Activated CD4-positive, alpha-beta T cell treated with anti-CD3 and anti-CD28 coated beads, Interleukin-2, amount 10 ng/mL, durations not matched to agents 7 days and 5 days (primary cell): ENCODE measurements at regions of chr16 and their contacts with region 1.

Region 1: DNA sequence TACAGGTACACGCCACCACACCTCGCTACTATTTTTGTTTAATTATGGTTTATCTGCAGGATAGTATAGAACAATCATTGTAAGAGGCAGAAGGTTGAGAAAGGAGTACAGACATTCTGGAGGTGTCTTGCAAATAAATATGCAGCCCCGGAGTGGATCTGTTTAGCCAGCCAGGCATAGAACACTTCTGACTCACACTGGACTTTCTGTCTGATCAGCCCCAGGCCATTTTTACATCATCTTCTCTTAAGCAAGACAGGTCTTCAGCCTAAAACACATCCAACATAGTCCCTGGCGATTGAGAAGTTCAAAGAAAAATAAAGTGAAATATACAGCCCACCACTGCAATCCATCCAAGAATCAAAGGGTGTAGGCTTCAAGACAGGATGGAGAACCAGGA is 81.4 kb downstream of the XYLT1 start:
- DNase-seq: no peak
- H3K4me3 Mint-ChIP-seq: no peak overlapping the region
- H3K27ac Mint-ChIP-seq: no peak overlapping the region
- H3K4me1 Mint-ChIP-seq: peaks cover 58% of the 10 kb centered on the region
- H3K27me3 Mint-ChIP-seq: no peaks in the 10 kb centered on the region

Region 2: DNA sequence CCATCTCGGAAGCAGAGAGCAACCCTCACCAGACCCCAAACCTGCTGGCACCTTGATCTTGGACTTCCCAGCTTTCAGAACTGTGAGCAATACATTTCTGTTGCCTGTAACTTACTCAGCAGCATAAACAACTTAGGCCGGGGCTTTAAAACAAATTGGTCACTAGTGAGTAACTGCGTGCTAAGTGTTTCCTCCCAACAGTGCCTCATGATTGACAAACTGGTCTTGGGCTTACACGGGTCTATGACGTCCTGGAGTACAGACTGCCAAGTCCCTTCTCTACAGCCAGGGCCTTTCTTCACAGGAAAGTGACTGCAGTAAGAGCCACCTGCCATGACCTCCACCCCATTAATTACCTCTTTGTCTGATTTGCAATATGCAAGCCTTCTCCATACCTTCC is 55.3 kb before region 1 on chr16:
- CTCF ChIA-PET with region 1: no interaction called
- POLR2A ChIA-PET with region 1: no interaction called
- DNase-seq: no peak
- H3K4me3 Mint-ChIP-seq: no peak overlapping the region
- H3K27ac Mint-ChIP-seq: no peak overlapping the region
- H3K4me1 Mint-ChIP-seq: peaks cover 29% of the 10 kb centered on the region
- H3K27me3 Mint-ChIP-seq: no peaks in the 10 kb centered on the region

Region 3: DNA sequence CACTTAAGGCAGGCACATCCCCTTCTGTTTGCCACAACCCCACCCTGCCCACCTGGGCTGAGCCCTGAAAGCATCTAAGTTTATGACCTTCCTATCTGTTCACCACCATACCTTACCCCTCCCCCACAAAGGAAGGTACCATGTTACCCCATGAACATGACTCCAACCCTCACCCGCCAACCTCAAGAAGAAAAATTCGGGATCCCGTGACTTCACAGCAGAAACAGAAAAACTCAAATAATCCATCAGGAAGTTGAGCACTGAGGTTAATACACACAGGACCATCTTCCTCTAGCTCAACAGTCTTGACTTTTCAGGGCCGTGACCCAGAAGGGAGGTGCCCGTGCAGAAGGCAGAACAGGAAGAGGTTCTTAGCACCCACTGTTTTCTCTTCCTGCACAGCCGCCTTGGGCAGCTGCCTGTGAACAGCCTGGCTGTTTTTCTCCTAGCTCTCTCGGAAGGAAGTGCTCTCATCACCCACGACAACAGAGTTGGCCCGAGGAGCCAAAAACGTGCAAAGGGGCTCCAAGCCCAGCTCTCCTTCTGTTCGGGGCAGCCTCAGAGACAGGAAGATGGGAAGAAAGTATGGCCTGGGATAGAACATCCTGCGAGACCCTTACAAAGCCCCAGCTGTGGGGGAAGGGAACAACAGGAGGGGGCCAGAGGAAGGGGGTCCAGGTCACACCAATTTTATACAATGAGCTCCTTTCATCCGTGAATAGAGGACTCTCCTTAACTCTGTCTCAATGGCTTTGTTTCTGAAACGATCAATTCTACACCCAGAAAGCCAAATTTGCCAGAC is 19.8 kb before region 1 on chr16:
- CTCF ChIA-PET with region 1: interaction called, 10 read pairs
- POLR2A ChIA-PET with region 1: no interaction called
- DNase-seq: peak; percentile 87
- H3K4me3 Mint-ChIP-seq: peak overlapping the region; percentile 81
- H3K27ac Mint-ChIP-seq: peak overlapping the region; percentile 99
- H3K4me1 Mint-ChIP-seq: peaks cover 93% of the 10 kb centered on the region
- H3K27me3 Mint-ChIP-seq: no peaks in the 10 kb centered on the region

Region 4: DNA sequence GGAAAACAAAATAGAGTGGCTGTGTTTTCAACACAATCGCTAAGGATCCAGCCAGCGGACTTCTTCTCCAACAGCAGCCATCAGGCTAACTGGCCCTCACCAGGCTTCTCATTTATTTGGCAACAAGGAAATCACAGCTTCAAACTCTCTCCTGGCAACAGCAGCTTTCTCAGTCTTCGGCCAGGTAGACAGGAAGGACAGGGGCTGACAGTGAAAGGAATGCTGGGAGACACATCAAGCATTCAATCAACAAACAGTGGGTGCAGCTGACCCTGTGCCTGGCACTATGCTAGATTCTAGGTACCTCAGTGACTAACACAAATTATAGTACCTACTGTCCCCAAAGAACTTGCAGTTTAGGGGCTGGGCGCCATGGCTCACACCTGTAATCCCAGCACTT is 10.6 kb after region 1 on chr16:
- CTCF ChIA-PET with region 1: no interaction called
- POLR2A ChIA-PET with region 1: no interaction called
- DNase-seq: no peak
- H3K4me3 Mint-ChIP-seq: no peak overlapping the region
- H3K27ac Mint-ChIP-seq: no peak overlapping the region
- H3K4me1 Mint-ChIP-seq: peaks cover 32% of the 10 kb centered on the region
- H3K27me3 Mint-ChIP-seq: no peaks in the 10 kb centered on the region

Region 5: DNA sequence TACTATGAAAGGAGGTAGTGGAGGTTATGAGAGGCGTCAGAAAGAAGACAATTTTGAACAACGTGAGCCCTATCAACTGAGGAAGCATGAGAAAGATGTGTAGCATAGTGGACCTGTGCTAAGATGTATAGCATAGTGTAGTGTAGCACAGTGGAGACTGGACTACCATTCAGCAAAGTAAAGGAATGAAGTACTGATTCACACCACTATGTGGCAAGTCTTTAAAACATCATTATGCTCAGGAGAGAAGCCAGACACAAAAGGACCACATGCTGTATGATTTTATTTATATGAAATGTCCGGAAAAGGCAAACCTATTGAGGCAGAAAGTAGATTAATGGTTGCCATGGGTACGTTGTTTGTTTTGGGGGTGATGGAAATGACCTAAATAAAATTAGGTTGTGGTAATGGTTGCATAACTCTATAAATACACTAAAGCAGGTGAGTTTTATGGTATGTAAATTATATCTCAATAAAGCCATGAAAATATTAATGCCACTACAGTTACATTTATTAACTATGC is 101.8 kb after region 1 on chr16:
- CTCF ChIA-PET with region 1: no interaction called
- POLR2A ChIA-PET with region 1: no interaction called
- DNase-seq: no peak
- H3K4me3 Mint-ChIP-seq: no peak overlapping the region
- H3K27ac Mint-ChIP-seq: no peak overlapping the region
- H3K4me1 Mint-ChIP-seq: no peaks in the 10 kb centered on the region
- H3K27me3 Mint-ChIP-seq: peaks cover 6% of the 10 kb centered on the region